ENCODE measurements at regions of chr22 and their contacts with region 1.

Region 1: GRCh38 chr22:20507253-20508066 is at the start of gene MED15:
- DNase-seq: peak; percentile 91 to 93
- ATAC-seq: peak; percentile 92 to 95 (median 93)
- H3K4me3 ChIP-seq: peak within 1 kb of the TSS; percentile 72 to 98 (median 85)
- H3K27ac ChIP-seq: peak within 1 kb of the TSS; percentile 80 to 98 (median 94)
- H3K4me1 ChIP-seq: peaks cover 21 to 50% (median 42%) of the 10 kb centered on the region in 9 donors
- H3K27me3 ChIP-seq: no peaks in the 10 kb centered on the region
- CTCF ChIP-seq: no peak
- total RNA-seq, gene MED15: 35.6 to 66.8 (median 44.0) TPM

Region 2: DNA sequence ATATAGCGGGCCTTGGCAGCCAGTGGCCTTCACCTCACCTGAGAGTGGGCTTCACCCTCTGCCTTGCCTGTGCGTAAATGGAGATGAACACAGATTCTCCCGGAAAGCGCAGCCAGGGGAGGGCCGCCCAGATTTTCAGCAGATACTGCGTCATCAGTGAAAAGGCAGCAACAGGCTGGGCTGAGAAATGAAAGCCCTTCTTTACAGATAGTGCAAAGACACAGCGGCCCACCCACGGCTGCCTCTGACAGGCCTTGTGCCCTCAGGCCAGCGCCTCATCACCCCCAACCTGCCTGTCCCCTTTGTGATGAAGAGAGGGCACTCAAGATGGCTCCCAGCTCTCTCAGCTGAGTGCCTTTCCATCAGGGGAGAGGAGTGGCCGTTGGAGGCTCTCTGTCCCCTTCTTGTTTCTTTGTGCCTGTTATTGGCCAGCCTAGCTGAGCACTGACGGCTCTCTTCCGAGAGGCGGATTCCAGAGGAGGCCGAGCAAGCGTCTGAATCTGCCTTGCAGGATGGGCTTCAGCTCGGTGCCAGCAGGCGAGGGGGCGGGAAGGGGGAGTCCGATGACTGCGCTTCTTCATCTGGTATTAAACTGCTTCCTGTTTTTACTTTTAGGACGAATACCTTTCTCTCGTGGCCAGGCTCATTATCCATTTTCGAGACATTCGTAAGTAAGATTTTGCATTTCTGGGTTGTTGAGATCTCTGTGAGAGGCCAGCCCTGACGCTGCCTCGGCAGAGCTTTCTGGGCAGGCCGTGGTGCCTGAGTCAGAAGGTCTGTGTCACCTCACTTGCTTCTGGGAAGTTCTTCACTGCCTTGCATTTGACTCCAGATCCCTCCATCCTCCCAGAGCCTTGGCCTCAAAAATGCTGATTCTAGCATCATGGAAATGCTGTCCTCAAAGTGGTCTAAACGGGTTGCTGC is 43.6 kb after region 1 on chr22:
- intact Hi-C with region 1: loop called in 3 of 10 experiments (anchors 5 kb)
- DNase-seq: peak; percentile 33 to 48
- ATAC-seq: peak in 6 of 8 donors; percentile 10 to 47 (median 27)
- H3K4me3 ChIP-seq: peak overlapping the region in 2 of 10 donors; percentile 6 to 13
- H3K27ac ChIP-seq: peak overlapping the region; percentile 81 to 92 (median 88)
- H3K4me1 ChIP-seq: peaks cover 48 to 99% (median 86%) of the 10 kb centered on the region in 9 donors
- H3K27me3 ChIP-seq: no peaks in the 10 kb centered on the region
- CTCF ChIP-seq: no peak

Region 3: DNA sequence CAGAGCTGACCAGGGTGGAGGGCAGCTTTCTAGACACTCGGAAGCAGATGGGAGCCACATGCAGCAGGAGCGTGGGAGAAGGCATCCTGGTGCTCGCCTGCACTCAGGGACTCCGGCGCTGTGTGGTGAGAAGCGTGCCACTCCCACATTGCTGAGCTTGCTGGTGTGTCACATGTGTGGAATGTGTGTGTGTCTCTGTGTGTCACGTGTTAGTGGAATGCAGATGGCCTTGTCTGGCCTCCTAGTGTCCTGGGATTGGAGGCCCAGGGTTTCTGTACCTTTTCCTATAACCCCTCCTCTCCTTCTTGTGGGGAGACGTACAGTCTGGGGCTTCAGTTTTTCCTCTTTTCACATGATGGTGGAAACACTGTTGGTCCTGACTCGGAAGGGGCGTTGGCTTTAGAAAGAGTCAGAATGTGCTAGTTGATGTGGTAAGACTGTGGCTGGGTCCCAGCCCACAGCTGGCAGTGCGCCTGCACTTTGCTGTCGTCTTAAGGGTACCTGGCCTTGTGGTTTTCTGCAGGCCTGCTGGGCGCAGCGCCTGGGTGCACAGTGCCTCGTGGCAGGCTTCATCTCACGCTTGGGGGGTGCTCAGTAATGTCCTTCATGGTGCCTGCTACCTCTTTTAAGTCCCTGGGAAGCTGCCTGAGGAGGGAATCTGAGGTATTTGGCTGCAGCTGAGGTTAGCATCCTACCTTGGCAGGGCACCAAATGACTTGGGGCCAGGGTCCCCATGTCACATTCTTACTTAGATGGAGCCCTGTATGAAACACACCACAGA is 61.7 kb after region 1 on chr22:
- intact Hi-C with region 1: loop called in 3 of 10 experiments (anchors 5 kb)
- DNase-seq: peak; percentile 44 to 65
- ATAC-seq: peak; percentile 67 to 87 (median 73)
- H3K4me3 ChIP-seq: no peak overlapping the region
- H3K27ac ChIP-seq: peak overlapping the region in 8 of 10 donors; percentile 5 to 58 (median 31)
- H3K4me1 ChIP-seq: peaks cover 11 to 70% (median 27%) of the 10 kb centered on the region in 9 donors
- H3K27me3 ChIP-seq: no peaks in the 10 kb centered on the region
- CTCF ChIP-seq: no peak

Measured in heart right ventricle (tissue), 16 donors.